Posterior vena cava (tissue), 2 donors: ENCODE measurements at regions of chr18 and their contacts with region 1.

Region 1: DNA sequence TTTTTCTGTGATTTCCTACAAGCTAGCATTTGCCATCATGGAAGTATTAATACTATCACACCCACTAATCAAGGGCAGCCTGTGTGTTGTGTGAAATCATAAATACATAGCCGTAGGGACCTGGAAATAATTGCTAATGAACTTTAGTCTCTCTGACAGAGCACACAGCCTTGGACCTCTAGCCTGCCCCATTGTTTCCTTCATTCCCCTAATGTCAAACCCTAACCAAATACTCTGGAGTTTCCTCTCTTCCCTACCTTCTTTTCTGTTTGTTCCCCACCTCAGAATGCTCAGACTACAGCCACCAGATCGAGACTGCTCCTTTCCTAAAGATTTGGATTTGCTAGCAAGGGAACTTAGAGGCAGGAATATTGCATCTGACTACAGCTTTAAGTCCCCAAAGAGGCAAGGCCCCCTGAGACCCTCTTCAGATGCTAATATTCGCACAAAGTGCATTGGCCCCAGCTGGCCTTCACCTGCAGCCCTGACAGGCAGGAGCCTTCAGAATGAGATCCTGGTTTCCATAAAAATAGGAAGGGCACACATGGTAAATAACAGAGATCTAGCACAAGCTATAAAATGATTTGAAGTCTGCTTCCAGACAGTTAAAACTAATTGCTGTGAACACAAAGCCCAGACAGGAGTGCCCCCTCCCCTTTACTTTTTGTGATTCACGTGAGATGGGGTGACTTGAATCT is 279.2 kb upstream of the DCC start:
- DNase-seq: no peak

Region 2: GRCh38 chr18:50079581-50080295 is 1981.0 kb before region 1 on chr18:
- intact Hi-C with region 1: loop called in 1 of 2 experiments (anchors 5 kb)
- DNase-seq: no peak